Mammary epithelial cell (primary cell): ENCODE measurements at regions of chr10 and their contacts with region 1.

Region 1: DNA sequence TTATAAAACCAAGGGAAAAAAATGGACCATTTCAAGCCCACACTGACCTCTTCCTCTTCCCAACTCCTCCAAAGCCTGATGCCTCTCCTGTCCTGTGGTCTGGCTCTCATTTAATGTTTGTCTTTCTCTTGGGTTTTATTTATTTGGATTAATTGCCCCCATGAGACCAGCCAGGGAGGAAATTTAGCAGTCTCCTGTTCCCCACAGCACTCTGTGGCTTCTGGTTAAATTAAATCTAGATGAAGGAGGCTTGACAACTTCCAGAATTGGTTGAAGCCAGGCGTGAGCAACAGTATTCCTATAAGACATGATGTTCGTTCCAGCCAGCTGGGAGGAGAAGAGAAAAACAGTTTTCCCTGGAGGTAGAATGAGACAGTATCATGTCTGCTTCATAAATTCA is 15.1 kb upstream of the PRLHR start:
- DNase-seq: no peak
- H3K4me3 ChIP-seq: no peak overlapping the region
- H3K27ac ChIP-seq: no peak overlapping the region
- H3K4me1 ChIP-seq: no peaks in the 10 kb centered on the region
- H3K27me3 ChIP-seq: peaks cover 2% of the 10 kb centered on the region
- CTCF ChIP-seq: no peak

Region 2: DNA sequence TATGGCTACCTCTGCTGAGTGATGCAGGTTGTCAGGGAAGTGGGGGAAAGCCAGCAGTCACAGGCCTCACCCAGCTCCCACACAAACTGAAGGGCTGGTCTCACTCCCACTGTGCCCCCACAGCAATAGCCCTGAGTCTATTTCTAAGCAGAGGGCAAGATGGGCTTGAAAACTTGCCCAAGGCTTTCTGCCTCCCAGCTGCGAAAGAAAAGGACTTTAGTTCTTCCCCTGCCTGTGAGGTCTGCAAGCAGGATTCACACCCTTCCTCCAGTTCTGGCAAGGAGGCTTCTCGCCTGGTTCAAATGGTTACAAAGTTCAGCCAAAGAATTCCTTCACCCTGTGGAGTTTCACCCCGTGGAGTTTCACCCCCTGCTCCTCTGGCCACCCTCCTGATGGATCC is 48.2 kb after region 1 on chr10:
- CTCF ChIA-PET with region 1: no interaction called
- dilution Hi-C with region 1: loop called (anchors 5 kb)
- in situ Hi-C with region 1: no loop called
- intact Hi-C with region 1: no loop called
- DNase-seq: no peak
- H3K4me3 ChIP-seq: no peak overlapping the region
- H3K27ac ChIP-seq: no peak overlapping the region
- H3K4me1 ChIP-seq: no peaks in the 10 kb centered on the region
- H3K27me3 ChIP-seq: peaks cover 2% of the 10 kb centered on the region
- CTCF ChIP-seq: no peak

Region 3: DNA sequence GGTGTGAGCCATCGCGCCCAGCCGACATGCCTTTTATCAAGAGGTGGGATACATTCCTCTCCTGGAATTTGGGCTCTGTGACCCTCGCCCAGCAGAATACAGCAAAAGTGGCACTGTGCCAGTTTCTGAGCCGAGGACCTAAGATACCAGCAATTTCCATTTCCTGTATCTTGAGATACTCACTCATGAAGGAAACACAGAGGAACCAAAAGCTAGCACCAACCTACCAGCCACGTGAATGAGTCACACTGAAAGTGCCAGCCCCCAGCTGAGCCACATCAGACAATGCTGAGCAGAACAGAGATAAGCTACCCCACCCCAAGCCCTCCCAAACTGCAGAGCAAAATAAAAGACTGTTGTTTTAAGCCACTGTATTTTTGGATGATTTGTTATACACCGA is 87.8 kb after region 1 on chr10:
- CTCF ChIA-PET with region 1: no interaction called
- dilution Hi-C with region 1: loop called (anchors 5 kb)
- in situ Hi-C with region 1: no loop called
- intact Hi-C with region 1: no loop called
- DNase-seq: peak; percentile 60
- H3K4me3 ChIP-seq: no peak overlapping the region
- H3K27ac ChIP-seq: no peak overlapping the region
- H3K4me1 ChIP-seq: peaks cover 9% of the 10 kb centered on the region
- H3K27me3 ChIP-seq: no peaks in the 10 kb centered on the region
- CTCF ChIP-seq: no peak

Region 4: DNA sequence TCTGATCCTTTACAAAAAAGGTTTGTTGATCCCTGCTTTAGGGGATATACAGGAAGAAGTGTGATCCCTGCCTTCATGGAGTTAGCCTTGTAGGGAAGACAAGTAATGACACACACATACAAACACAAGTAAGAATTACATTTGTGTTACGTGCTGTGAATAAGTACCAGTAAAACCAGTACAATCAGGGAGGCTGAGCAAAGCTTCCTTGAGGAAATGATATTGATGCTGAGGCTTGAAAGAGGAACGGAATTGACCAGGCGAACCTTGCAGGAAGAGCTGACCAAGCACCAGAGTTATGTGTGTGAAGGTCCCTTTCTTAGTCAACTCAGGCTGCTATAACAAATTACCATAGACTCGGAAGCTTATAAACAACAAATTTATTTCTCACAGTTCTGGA is 227.8 kb after region 1 on chr10:
- CTCF ChIA-PET with region 1: interaction called, 10 read pairs
- dilution Hi-C with region 1: no loop called
- in situ Hi-C with region 1: no loop called
- intact Hi-C with region 1: no loop called
- DNase-seq: no peak
- H3K4me3 ChIP-seq: no peak overlapping the region
- H3K27ac ChIP-seq: no peak overlapping the region
- H3K4me1 ChIP-seq: peaks cover 44% of the 10 kb centered on the region
- H3K27me3 ChIP-seq: no peaks in the 10 kb centered on the region
- CTCF ChIP-seq: no peak